H1 (cell line): ENCODE measurements at regions of chr19 and their contacts with region 1.

Region 1: GRCh38 chr19:50266896-50267295 is 62.3 kb downstream of the KCNC3 start:
- DNase-seq: peak; percentile 84 to 97
- H3K4me3 ChIP-seq: peak overlapping the region in 1 of 4 experiments; percentile 15; a peak in 1 of 8 replicates
- H3K27ac ChIP-seq: no peak overlapping the region
- H3K4me1 ChIP-seq: peaks cover 0 to 6% (median 0%) of the 10 kb centered on the region in 4 experiments; a peak in 1 of 7 replicates
- H3K27me3 ChIP-seq: no peaks in the 10 kb centered on the region
- CTCF ChIP-seq: no peak
- EP300 ChIP-seq: no peak
- POLR2A ChIP-seq: no peak
- RAD21 ChIP-seq: no peak

Region 2: GRCh38 chr19:50252111-50252886 is 14.6 kb before region 1 on chr19:
- CTCF ChIA-PET with region 1: interaction called, 51 read pairs
- POLR2A ChIA-PET with region 1: interaction called, 4 read pairs
- DNase-seq: peak in 1 of 2 experiments; percentile 92
- H3K4me3 ChIP-seq: no peak overlapping the region
- H3K27ac ChIP-seq: no peak overlapping the region
- H3K4me1 ChIP-seq: no peaks in the 10 kb centered on the region
- H3K27me3 ChIP-seq: no peaks in the 10 kb centered on the region
- CTCF ChIP-seq: peak; percentile 63 to 93 (median 81)
- EP300 ChIP-seq: no peak
- POLR2A ChIP-seq: no peak
- RAD21 ChIP-seq: peak; percentile 47 to 60